ENCODE measurements at regions of chr6 and their contacts with region 1.

Region 1: DNA sequence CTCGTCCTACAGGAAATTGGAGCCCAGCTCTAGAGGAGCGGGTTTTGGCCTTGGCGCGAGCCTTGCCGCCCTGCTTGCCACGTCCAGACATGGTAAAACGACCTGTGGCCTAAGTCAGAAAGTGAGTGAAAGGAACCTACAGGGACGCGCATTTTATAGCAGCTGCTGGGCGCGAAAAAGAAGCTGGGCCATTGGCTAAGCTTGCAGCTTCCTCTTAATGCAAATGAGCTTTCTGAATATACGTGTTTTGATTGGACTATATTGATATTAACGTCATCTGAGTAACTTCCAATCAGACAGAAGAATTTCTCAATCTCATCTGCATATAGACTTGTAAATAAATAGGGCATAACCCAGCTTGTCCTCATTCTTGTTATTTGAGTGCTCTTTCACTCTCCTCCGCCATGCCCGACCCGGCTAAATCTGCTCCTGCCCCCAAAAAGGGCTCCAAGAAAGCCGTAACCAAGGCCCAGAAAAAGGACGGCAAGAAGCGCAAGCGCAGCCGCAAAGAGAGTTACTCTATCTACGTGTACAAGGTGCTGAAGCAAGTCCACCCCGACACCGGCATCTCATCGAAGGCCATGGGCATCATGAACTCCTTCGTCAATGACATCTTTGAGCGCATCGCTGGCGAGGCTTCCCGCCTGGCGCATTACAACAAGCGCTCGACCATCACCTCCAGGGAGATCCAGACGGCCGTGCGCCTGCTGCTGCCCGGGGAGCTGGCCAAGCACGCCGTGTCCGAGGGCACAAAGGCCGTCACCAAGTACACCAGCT is 18.9 kb downstream of the OR2B2 start:
- DNase-seq: peak; percentile 94
- H3K4me3 Mint-ChIP-seq: no peak overlapping the region
- H3K27ac Mint-ChIP-seq: no peak overlapping the region
- H3K4me1 Mint-ChIP-seq: peaks cover 39% of the 10 kb centered on the region
- H3K27me3 Mint-ChIP-seq: no peaks in the 10 kb centered on the region

Region 2: GRCh38 chr6:27132532-27133280 is 760.5 kb before region 1 on chr6:
- intact Hi-C with region 1: loop called (anchors 1 kb)
- DNase-seq: peak; percentile 95
- H3K4me3 Mint-ChIP-seq: no peak overlapping the region
- H3K27ac Mint-ChIP-seq: no peak overlapping the region
- H3K4me1 Mint-ChIP-seq: peaks cover 38% of the 10 kb centered on the region
- H3K27me3 Mint-ChIP-seq: no peaks in the 10 kb centered on the region

Region 3: DNA sequence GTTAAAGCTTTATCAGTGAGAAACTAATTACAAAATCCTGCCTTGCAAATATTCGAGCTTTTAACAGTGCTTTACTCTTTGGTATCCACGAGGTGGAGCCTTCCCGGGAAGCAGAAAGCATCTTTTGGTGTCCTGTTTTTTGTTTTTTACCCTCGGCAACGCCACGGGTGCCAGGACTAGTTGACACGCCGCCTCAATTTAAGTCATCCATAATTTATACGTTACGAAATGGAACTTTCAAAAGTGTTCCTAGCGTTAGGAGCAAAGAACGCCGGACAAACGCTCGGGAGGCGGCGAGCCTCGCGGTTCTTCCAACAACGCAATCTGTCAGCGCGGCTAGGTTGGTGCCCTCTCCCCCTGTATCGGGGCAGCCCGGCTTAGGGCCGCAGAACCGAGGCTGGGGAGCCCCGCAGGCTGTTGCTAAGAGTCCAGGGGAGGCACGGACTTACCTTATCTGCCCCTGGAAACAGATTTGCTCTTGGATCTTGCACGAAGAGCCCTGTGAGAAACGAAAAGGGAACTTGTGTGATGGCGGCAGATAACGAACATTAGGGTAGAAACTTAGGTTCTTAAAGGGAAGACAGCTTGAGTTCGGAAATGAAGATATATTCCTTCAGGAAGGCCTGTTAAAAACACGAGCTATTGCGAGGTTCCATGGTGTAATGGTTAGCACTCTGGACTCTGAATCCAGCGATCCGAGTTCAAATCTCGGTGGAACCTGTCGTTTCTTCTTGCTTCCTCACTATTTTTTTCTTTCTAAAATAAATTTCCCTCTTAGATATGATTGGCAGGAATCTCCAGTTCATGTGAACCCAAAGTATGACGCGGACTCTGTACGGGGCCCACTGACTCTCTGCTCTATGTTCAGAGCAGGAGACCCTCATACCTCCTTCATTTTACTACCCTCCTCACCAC is 374.1 kb before region 1 on chr6:
- intact Hi-C with region 1: loop called (anchors 2 kb)
- DNase-seq: peak; percentile 30
- H3K4me3 Mint-ChIP-seq: peak overlapping the region; percentile 79
- H3K27ac Mint-ChIP-seq: peak overlapping the region; percentile 62
- H3K4me1 Mint-ChIP-seq: peaks cover 11% of the 10 kb centered on the region
- H3K27me3 Mint-ChIP-seq: peaks cover 30% of the 10 kb centered on the region

Region 4: DNA sequence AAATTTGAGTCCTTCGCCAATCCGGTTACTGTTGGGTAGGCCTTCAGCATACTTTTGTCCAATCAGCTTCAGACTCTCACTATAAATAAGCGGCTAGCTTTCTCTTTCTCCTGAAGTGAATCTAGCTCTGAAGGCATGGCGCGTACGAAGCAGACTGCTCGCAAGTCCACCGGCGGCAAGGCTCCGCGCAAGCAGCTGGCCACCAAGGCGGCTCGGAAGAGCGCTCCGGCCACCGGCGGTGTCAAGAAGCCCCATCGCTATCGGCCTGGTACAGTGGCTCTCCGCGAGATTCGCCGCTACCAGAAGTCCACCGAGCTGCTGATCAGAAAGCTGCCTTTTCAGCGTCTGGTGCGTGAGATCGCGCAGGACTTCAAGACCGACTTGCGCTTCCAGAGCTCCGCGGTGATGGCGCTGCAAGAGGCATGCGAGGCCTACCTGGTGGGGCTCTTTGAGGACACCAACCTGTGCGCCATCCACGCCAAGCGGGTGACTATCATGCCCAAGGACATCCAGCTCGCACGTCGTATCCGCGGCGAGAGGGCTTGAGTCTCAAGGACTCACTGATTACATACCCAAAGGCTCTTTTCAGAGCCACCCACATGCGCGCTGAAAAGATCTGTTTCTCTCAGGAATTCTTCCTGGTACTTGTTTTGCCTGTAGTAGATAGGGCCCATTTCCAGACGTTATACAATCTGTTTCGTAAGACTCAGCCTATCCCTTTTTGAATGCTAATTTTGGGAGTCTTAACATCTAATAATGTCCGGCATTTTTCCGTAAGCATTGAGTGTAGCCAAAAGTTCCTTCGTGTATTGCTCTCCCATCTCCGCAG is 83.1 kb before region 1 on chr6:
- intact Hi-C with region 1: loop called (anchors 1 kb)
- DNase-seq: peak; percentile 83
- H3K4me3 Mint-ChIP-seq: peak overlapping the region; percentile 84
- H3K27ac Mint-ChIP-seq: peak overlapping the region; percentile 92
- H3K4me1 Mint-ChIP-seq: peaks cover 72% of the 10 kb centered on the region
- H3K27me3 Mint-ChIP-seq: no peaks in the 10 kb centered on the region

Region 5: DNA sequence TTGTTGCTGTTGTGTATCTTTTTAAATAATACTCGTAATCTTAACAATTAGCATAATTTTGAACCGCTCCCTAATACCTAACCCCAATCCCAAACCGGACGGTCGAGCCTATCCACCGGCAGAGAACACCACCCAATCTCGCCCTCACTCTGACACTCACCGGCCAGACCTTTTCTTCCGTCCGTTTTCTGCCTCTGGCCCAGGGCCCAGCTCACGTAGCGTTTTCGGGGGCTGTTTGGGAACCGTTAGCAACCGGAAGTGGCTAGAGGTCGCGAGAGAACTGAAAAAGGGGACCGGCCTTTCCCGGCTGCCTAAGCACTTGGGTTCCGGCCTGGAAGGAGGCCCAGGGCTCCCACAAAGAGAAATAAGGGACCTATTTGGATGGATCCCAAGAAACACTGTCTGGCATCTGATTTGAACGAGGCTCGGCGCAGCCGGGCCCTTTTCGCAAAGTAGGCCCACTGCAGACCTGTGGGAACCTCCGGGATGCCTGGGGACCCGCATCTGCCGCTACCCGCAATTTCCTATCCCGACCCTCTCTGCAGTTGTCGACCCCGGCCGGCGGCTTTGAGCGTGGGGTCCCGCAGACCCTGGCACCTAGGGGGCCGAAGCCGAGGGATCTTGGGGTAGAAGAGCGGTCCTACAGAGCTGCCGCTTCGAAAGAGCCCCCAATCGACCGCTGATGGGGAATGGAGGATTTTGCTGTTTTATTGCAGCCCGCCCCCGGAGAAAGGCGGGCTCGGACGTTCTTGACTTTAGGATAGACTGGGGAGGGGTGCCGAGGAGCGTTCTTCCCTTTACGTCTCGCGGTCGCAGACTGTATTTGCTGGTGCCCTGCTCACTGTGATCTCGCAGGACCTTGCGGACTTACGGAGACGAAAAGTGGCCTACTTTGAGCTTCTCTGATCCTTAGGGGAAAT is 243.6 kb after region 1 on chr6:
- intact Hi-C with region 1: loop called (anchors 5 kb)
- DNase-seq: peak; percentile 68
- H3K4me3 Mint-ChIP-seq: peak overlapping the region; percentile 98
- H3K27ac Mint-ChIP-seq: peak overlapping the region; percentile 98
- H3K4me1 Mint-ChIP-seq: peaks cover 59% of the 10 kb centered on the region
- H3K27me3 Mint-ChIP-seq: no peaks in the 10 kb centered on the region

Measured in activated T-helper 2 cell treated with anti-CD3 and anti-CD28 coated beads, Interferon-gamma antibody, Interleukin-2, Interleukin-4, amounts not matched to agents 10 μg/mL and 5 μg/mL and 100 μg/mL, durations not matched to agents 14 hours and 24 hours and 36 hours (primary cell).